A549 (cell line): ENCODE measurements at regions of chr6 and their contacts with region 1.

Region 1: DNA sequence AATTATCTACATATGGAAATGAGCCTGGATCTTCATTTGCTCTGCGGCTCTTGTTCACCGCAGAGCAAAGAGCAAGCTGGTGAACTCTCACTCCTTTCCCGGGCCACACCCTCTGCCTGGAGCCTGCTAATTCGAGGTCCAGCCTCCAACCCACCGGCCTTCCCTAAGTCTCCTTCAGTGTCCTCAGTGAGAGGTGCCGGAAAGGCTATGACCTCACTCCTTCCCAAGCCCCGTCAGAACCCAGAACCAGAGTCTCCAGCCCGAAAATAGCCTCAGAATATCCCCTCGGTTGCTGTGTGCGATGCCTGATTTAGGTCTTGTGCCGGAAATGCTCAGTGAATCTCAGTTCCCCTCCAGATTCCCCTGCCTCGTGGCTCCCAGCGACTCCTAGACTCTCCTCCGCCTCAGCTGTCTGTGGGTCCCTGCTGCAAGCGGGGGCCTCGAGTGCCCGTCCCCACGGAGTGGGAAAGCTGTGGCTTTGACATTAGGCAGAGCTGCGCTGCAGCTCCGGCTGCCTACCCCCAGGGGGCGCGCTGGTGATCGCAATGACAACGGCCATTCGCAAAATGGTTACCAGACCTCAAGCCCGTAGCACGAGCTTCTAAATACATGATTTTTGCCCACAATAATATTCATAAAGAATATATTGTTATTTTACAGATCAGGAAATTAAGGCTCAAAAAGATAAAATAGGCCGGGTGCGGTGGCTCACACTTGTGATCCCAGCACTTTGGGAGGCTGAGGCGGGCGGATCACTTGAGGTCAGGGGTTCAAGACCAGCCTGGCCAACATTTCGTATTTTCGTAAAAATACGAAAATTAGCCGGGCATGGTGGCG is 4.1 kb upstream of the BNIP5 start:
- DNase-seq: peak; percentile 60 to 68
- ATAC-seq: peak; percentile 84 to 94
- H3K4me3 ChIP-seq: 0 out of 3 replicates have a peak overlapping the region, but pooled peaks have one; percentile 21
- H3K27ac ChIP-seq: peak overlapping the region in 1 of 2 experiments; percentile 27; a peak in 1 of 6 replicates
- H3K4me1 ChIP-seq: no peaks in the 10 kb centered on the region
- CTCF ChIP-seq: peak; percentile 77
- EP300 ChIP-seq: no peak
- POLR2A ChIP-seq: no peak
- RAD21 ChIP-seq: peak; percentile 41 to 46

Region 2: DNA sequence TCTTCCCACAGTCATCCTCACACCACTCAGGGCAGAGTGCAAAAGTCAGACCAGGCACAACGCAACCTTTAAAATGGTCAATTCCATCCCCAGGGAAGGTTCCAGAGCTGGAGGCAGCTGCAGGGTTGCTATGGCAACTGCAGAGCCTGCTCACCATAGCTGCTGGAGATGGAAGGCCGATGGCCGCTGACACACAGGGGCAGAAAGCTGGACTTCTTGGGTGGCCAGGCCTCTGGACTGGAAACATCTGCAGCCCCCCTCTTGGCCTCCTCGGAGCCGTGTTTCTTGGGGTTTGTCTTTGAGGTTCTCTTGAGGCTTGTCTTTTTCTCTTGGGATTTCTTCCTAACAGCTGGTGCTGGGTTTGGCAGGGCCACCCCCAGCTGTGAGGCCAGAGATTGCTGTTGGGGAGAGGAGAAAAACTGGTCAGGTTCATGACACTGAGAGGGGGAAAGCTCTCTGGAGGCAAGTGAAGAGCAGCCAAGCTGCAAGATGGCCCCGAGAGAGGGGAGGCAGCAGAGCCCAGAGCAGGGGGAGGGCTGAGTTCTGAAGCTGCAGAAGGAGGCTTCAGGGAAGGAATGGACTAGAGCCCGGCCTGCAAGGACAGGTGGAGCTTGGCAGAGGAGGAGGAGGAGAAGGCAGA is 14.4 kb before region 1 on chr6:
- CTCF ChIA-PET with region 1: interaction called, 16 read pairs
- POLR2A ChIA-PET with region 1: no interaction called
- DNase-seq: no peak
- ATAC-seq: no peak
- H3K4me3 ChIP-seq: no peak overlapping the region
- H3K27ac ChIP-seq: no peak overlapping the region
- H3K4me1 ChIP-seq: no peaks in the 10 kb centered on the region
- CTCF ChIP-seq: no peak
- EP300 ChIP-seq: no peak
- POLR2A ChIP-seq: no peak
- RAD21 ChIP-seq: no peak

Region 3: GRCh38 chr6:36350681-36351571 is 10.1 kb after region 1 on chr6:
- CTCF ChIA-PET with region 1: interaction called, 26 read pairs
- POLR2A ChIA-PET with region 1: no interaction called
- DNase-seq: no peak
- ATAC-seq: no peak
- H3K4me3 ChIP-seq: no peak overlapping the region
- H3K27ac ChIP-seq: no peak overlapping the region
- H3K4me1 ChIP-seq: no peaks in the 10 kb centered on the region
- CTCF ChIP-seq: no peak
- EP300 ChIP-seq: no peak
- POLR2A ChIP-seq: no peak
- RAD21 ChIP-seq: no peak

Region 4: DNA sequence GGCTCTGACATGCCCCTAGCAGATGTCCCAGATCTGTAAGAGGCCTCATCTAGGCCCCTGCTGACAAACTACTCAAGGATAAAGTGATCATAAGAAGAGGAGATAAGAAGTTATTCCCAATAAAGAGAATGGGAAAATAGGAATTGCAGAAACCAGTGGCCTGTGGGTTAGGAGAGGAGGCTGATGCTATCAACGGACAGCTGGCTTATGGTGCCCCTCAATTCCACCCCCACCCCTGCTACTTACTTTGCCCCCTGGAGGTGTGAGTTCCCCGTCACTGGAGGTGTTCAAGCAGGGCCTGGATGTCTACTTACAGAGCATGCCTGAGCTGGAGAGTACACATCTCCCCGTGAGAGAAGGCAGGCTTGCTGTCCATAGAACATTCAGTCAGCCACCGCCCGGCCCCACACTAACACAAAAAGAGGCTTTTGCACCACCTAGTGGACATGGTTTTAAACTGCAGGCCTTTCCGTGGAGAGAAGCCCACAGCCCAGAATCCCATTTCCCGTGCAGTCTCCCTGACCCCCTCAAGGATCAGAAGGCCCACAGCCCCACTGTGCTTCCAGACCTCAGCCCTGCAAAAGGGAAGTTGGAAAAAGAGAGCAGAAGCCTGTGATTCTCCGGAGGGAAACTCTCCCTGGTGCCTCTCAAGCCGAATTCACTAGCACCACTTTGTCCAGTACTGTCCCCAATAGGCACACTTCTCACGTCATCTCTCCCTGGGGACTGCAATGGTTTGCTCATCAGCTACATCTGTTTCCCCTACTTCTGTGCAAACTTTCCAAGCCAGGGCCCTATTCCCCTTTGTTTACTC is 19.6 kb after region 1 on chr6:
- CTCF ChIA-PET with region 1: interaction called, 46 read pairs
- POLR2A ChIA-PET with region 1: no interaction called
- DNase-seq: peak; percentile 53 to 68
- ATAC-seq: peak; percentile 90 to 96
- H3K4me3 ChIP-seq: no peak overlapping the region
- H3K27ac ChIP-seq: no peak overlapping the region
- H3K4me1 ChIP-seq: 0 out of 3 replicates have a peak, but pooled peaks cover 6% of the 10 kb centered on the region
- CTCF ChIP-seq: peak; percentile 65
- EP300 ChIP-seq: no peak
- POLR2A ChIP-seq: no peak
- RAD21 ChIP-seq: peak; percentile 78 to 84

Region 5: DNA sequence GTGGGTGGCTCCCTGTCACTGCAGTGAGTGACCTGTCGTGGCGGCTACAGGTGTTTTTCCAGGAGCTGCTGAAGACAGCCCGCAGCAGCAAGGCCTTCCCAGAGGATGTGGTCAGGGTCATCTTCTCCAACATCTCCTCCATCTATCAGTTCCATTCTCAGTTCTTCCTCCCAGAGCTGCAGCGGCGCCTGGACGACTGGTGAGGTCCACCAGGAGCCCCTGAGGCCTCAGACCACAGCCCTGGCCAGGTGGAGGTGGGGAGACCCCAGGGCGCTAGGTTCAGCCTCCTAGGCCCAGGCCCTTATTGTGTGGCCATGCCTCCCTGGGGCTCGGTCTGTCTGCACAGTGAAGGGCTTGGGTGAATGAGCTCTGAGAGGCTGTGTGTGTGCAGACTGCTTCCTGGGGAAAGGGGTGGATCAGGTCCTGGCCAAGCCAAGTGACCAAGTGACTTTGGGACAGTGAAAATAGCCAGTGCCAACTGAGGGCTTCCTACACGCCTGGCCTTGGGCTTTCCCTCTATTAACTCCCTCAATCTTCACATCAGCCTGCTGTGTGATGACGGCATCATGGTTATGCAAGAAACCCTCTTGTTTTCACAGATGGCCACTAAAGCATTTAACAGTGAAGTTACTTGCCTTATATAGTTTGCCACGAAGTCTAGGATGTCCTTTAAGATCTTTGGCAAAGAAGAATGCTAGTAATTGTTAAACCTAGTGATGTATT is 671.0 kb after region 1 on chr6:
- CTCF ChIA-PET with region 1: no interaction called
- POLR2A ChIA-PET with region 1: no interaction called
- DNase-seq: no peak
- ATAC-seq: no peak
- H3K4me3 ChIP-seq: no peak overlapping the region
- H3K27ac ChIP-seq: no peak overlapping the region
- H3K4me1 ChIP-seq: no peaks in the 10 kb centered on the region
- CTCF ChIP-seq: no peak
- EP300 ChIP-seq: no peak
- POLR2A ChIP-seq: no peak
- RAD21 ChIP-seq: no peak